ENCODE measurements at regions of chr19 and their contacts with region 1.

Region 1: DNA sequence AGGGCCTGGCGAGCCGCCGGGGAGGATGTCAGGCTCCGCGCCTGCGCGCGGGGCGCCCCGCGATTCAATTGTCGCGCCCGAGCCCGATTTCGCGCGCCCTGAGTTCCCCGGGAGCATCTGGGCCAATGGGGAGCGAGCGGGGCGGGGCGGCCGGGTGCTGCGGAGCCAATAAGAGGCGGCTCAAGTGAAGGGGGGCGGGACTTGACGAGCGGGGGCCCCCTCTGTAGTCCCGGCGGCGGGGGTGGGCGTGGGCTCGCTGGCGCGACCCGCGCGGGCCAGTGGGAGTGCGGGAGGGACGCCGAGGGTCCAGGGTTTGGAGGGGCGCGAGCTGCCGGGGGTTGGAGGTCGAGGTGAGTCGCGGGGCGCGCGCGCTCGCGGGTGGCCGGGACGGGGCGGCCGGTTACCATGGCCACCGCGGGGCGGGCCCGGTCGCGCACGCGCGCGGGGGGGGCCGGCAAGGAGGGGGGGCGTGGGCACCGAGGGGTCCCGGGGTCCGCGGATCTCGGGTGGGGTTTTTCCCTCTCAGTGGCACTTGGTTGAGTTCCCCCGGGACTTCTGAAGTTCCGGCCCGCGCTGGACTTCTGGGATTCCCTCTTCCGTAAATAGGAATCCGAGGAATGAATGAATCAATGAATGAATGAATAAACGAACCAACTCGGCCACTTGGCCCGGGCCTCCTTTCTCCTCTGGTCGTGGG is 744 bp downstream of the UHRF1 start:
- DNase-seq: peak; percentile 95 to 97
- ATAC-seq: peak; percentile 91
- H3K4me3 ChIP-seq: peak overlapping the region; percentile 68 to 79
- H3K27ac ChIP-seq: no peak overlapping the region
- H3K4me1 ChIP-seq: no peaks in the 10 kb centered on the region
- H3K27me3 ChIP-seq: no peaks in the 10 kb centered on the region

Region 2: DNA sequence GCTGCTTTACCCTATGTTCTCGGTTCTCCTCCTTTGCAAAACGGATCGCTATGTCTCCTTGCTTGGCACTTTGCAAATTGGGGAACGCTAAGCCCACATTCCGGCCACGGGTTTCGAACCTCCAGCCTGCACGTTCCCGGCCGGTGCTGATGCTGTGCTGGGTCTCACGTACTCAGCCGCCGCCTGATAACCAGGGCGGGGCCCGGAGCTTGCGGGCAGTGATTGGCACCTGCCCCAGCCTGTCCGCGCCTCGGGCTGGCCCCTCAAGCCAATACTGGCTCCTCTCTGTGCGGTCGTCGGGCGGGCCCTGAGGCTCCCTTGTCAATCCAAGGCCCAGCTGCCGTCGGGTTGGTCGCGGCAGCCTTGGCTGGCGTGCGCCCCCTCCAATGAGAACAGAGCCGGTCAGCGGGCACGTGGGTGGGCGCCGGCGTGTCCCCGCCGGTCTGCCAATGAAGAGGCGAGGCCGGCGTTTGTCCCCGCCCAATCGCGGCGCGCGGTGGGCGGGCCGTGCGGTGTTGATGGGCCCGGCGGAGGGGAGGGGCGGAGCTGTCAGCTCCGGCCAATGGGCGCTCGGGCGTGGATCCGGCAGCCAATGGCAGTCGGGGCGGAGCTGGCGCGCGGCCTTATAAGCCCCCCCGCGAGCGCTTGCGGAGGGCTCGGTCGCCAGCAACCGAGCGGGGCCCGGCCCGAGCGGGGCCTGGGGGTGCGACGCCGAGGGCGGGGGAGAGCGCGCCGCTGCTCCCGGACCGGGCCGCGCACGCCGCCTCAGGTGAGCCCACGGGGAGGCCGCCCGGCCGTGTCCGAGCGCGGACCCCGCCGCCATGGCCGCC is 58.6 kb after region 1 on chr19 and contains the start of gene KDM4B:
- intact Hi-C with region 1: loop called in 1 of 2 experiments (anchors 5 kb)
- DNase-seq: peak; percentile 99 to 100
- ATAC-seq: peak; percentile 99
- H3K4me3 ChIP-seq: peak within 1 kb of the TSS; percentile 76 to 78
- H3K27ac ChIP-seq: no peak within 1 kb of the TSS
- H3K4me1 ChIP-seq: no peaks in the 10 kb centered on the region
- H3K27me3 ChIP-seq: no peaks in the 10 kb centered on the region
- total RNA-seq, gene KDM4B: 37.5 to 58.1 TPM

Measured in aorta (tissue), 5 donors.